OCI-LY7 (cell line): ENCODE measurements at regions of chr7 and their contacts with region 1.

Region 1: GRCh38 chr7:38369816-38370493 is 96.5 kb upstream of the TARP start:
- DNase-seq: peak; percentile 80
- H3K4me3 ChIP-seq: no peak overlapping the region
- H3K27ac ChIP-seq: no peak overlapping the region
- H3K4me1 ChIP-seq: peaks cover 19% of the 10 kb centered on the region
- CTCF ChIP-seq: peak; percentile 96

Region 2: GRCh38 chr7:38351601-38352000 is 18.4 kb before region 1 on chr7:
- CTCF ChIA-PET with region 1: interaction called, 3 read pairs
- POLR2A ChIA-PET with region 1: interaction called, 11 read pairs
- intact Hi-C with region 1: no loop called
- DNase-seq: no peak
- H3K4me3 ChIP-seq: peak overlapping the region; percentile 63
- H3K27ac ChIP-seq: no peak overlapping the region
- H3K4me1 ChIP-seq: peaks cover 42% of the 10 kb centered on the region
- CTCF ChIP-seq: no peak